ENCODE measurements at regions of chr22 and their contacts with region 1.

Region 1: DNA sequence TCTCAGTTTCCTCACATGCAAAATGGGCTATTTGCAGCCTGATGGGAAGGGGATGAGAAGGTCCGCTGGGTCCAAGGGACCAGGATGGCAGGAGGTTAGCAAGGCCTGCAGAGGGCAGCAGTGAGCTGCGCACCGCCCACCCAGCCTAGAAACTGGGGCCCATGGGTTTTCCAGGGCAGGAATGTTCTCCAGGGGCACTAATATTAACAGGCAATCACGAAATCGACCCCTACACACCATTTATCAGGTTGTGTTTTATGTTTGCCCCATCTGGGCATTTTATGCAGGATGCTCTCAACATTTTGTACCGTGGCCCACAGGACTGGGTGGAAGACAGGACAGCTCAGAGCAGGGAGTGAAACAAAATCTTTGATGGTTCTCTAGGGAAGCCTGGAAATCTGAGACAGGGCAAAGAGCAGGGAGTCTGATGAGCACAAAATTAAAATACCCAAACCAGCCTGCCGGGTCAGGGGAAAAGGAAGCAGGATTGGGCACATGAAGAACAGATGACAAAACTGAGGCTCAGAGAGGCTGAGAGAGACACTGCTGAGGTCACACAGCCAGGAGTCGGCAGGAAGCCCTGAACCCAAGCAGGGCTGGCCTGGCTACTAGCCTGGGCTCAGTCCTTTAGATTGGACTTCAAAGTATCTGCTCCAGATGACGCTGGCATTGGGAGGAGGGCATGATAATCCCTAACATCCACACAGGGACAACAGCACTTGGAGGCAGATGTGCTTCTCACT is 1.6 kb upstream of the BCR start:
- DNase-seq: peak in 1 of 2 donors; percentile 84
- H3K4me3 ChIP-seq: peak overlapping the region in 1 of 2 donors; percentile 95
- H3K27ac ChIP-seq: peak overlapping the region; percentile 77 to 90
- H3K4me1 ChIP-seq: peaks cover 14 to 28% of the 10 kb centered on the region in 2 donors
- H3K27me3 ChIP-seq: no peaks in the 10 kb centered on the region
- CTCF ChIP-seq: peak; percentile 96 to 97 (median 97)

Region 2: GRCh38 chr22:23204541-23205157 is 26.0 kb after region 1 on chr22:
- intact Hi-C with region 1: loop called (anchors 1 kb)
- DNase-seq: peak in 1 of 2 donors; percentile 82
- H3K4me3 ChIP-seq: peak overlapping the region in 1 of 2 donors; percentile 1
- H3K27ac ChIP-seq: peak overlapping the region; percentile 75 to 79
- H3K4me1 ChIP-seq: peaks cover 25 to 46% of the 10 kb centered on the region in 2 donors
- H3K27me3 ChIP-seq: no peaks in the 10 kb centered on the region
- CTCF ChIP-seq: no peak

Region 3: GRCh38 chr22:23225724-23226496 is 47.2 kb after region 1 on chr22:
- intact Hi-C with region 1: loop called (anchors 1 kb)
- DNase-seq: peak in 1 of 2 donors; percentile 93
- H3K4me3 ChIP-seq: peak overlapping the region in 1 of 2 donors; percentile 9
- H3K27ac ChIP-seq: peak overlapping the region; percentile 85 to 88
- H3K4me1 ChIP-seq: peaks cover 7 to 55% of the 10 kb centered on the region in 2 donors
- H3K27me3 ChIP-seq: no peaks in the 10 kb centered on the region
- CTCF ChIP-seq: no peak

Region 4: DNA sequence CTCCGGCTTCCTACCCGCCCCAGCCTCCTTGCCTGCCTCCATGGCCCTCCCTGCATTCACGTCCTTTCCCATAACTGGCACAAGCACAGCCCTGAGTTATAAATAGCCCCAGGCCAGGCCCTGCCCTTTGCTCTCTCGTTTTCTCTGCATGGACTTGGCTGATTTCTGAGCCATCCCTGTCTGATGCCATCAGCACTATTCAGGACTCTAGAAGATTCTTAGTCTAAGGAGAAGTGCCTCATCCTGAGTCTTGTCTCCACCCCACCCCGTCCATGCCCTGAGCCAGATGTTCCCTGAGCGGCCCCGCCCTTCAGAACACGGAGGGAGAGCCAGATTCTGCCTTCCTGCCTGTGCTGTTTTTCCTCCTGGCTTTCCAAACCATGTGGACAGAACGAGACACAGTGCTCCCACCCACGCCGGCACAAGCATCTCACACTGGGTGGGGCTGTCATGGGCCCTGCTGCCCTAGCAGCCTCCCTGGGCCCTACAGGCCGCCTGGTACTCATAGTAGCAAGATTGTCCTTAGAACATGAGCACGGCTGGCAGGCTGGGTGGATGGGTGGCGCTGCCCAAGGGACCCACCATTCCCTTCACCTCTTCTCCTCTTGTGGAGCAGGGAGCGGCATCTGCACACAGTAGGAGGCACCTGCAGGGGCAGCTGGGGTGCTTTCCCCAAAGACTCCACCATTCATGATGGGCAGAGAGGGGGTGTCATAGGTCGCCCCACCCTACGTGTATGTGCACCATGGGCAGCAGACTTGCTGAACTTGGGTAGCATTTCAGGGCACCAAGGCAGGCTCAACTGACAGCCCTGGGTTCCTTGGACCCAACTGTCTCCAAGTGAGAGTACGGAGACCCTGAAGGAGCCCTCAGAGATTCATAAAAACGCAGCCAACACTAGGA is 78.6 kb after region 1 on chr22:
- intact Hi-C with region 1: loop called (anchors 1 kb)
- DNase-seq: peak; percentile 39 to 92
- H3K4me3 ChIP-seq: no peak overlapping the region
- H3K27ac ChIP-seq: peak overlapping the region; percentile 82 to 90
- H3K4me1 ChIP-seq: peaks cover 12 to 35% of the 10 kb centered on the region in 2 donors
- H3K27me3 ChIP-seq: no peaks in the 10 kb centered on the region
- CTCF ChIP-seq: no peak

Region 5: GRCh38 chr22:23281406-23282088 is 102.9 kb after region 1 on chr22:
- intact Hi-C with region 1: loop called (anchors 1 kb)
- DNase-seq: peak; percentile 59 to 93
- H3K4me3 ChIP-seq: peak overlapping the region in 1 of 2 donors; percentile 20
- H3K27ac ChIP-seq: peak overlapping the region; percentile 86 to 93
- H3K4me1 ChIP-seq: peaks cover 7 to 44% of the 10 kb centered on the region in 2 donors
- H3K27me3 ChIP-seq: no peaks in the 10 kb centered on the region
- CTCF ChIP-seq: peak; percentile 95 to 98 (median 97)

Region 6: DNA sequence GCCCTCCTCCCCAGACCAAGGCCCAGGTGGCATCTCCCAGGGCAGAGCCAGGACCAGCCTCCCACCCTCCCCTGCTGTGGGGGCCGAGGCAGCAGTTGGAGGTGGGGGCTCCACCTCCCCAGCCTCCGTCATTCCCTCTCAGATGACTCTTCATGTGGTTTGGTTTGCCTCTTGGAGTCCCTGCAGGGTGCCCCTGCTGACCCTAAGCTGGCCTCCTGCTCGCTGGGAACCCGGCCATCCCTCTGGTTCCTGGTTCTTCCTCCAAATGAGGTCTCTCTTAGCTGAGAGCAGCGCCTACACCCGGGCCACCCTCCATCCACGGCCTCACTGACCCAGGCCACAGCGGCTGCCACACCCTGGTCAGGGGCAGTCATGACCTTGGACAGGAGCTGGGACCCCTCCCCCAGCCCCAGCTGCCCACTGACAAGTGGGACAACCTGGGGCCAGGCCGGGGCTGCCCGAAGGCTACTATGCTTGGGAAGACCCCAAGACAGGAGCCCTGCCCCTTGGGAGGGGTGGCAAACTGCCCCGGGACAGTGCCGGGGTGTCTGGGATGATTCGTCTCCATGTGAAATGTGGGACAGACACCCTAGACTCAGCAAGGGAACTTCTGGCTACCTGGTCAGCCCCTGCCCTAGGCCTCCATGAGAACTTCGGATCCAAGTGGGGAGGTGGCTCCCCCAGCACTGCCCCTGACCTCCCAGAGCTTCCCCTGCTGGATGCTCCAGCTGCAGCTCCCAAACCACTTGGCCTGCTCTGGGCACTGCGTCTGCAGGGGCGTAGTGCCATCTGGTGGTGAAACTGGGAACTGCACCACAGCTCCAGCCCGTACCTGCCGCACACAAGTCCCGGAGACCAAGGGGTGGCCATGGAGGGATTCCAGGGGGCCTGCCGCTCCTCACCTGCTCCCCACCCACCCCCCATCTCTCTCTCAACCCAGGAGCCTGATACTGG is 206.9 kb after region 1 on chr22:
- intact Hi-C with region 1: loop called (anchors 2 kb)
- DNase-seq: peak in 1 of 2 donors; percentile 84
- H3K4me3 ChIP-seq: no peak overlapping the region
- H3K27ac ChIP-seq: no peak overlapping the region
- H3K4me1 ChIP-seq: peaks cover 0 to 3% of the 10 kb centered on the region in 2 donors
- H3K27me3 ChIP-seq: no peaks in the 10 kb centered on the region
- CTCF ChIP-seq: peak; percentile 96 to 99 (median 97)

Region 7: GRCh38 chr22:23521441-23522113 is 342.9 kb after region 1 on chr22:
- intact Hi-C with region 1: loop called (anchors 10 kb)
- DNase-seq: peak; percentile 47 to 94
- H3K4me3 ChIP-seq: peak overlapping the region; percentile 51 to 64
- H3K27ac ChIP-seq: peak overlapping the region; percentile 91 to 96
- H3K4me1 ChIP-seq: peaks cover 12 to 17% of the 10 kb centered on the region in 2 donors
- H3K27me3 ChIP-seq: no peaks in the 10 kb centered on the region
- CTCF ChIP-seq: peak in 1 of 3 experiments; percentile 24

Region 8: GRCh38 chr22:23675492-23676415 is 497.1 kb after region 1 on chr22:
- intact Hi-C with region 1: no loop called
- DNase-seq: no peak
- H3K4me3 ChIP-seq: no peak overlapping the region
- H3K27ac ChIP-seq: no peak overlapping the region
- H3K4me1 ChIP-seq: no peaks in the 10 kb centered on the region
- H3K27me3 ChIP-seq: no peaks in the 10 kb centered on the region
- CTCF ChIP-seq: no peak

Measured in ascending aorta (tissue), 2 donors.